Lower lobe of right lung (tissue), 2 donors: ENCODE measurements at regions of chr2 and their contacts with region 1.

Region 1: DNA sequence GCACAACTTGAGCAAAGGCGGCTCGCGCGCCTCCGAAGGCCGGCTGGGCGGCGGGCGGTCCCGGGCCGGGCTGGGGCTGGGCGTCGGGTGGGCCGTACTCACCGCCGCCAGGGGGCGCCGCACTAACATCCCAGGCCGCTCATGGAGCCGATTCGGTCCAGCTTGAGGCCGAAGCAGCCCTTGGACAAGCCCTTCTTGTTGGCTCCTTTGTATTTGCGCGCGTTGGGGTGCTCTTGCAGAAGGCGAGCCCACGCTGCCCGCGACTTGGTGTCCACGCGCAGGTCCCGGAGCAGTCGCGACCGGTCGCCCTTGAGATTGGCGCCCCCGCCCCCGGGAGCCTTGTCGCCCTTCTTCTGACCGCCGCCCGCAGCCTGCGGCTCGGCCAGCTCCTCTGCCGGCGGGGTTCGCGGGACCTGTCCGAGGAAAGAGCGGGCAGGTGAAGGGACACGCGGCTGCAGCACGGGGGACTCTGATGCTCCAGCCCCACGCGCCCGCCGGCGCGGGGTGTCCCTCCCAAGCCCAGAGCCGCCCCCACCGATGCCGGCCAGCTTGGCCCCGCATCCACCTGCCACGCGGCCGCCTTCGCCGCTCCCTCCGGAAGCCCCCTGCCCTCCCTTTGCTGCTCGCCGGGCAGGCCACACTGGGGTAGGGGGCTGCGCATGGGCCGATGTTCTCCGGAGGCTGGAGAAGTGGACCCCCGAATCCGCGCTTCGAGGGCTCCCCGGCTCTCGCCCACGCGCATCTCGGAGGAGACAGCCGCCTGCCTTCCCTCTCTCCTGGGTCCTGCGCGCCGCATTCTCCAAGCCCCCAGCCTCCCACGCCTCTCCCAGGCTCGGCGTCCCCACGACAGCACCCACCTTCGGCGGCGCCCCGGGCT is 655 bp downstream of the NPPC start:
- DNase-seq: peak; percentile 86
- ATAC-seq: peak; percentile 94 to 97
- H3K4me3 ChIP-seq: peak overlapping the region; percentile 50
- H3K27ac ChIP-seq: no peak overlapping the region
- H3K4me1 ChIP-seq: peaks cover 25% of the 10 kb centered on the region
- H3K27me3 ChIP-seq: peaks cover 70% of the 10 kb centered on the region
- CTCF ChIP-seq: peak; percentile 96

Region 2: GRCh38 chr2:231452799-231453508 is 472.6 kb before region 1 on chr2:
- intact Hi-C with region 1: no loop called
- DNase-seq: no peak
- ATAC-seq: peak in 1 of 2 donors; percentile 6
- H3K4me3 ChIP-seq: no peak overlapping the region
- H3K27ac ChIP-seq: no peak overlapping the region
- H3K4me1 ChIP-seq: no peaks in the 10 kb centered on the region
- H3K27me3 ChIP-seq: no peaks in the 10 kb centered on the region
- CTCF ChIP-seq: no peak

Region 3: GRCh38 chr2:232142049-232142448 is 216.5 kb after region 1 on chr2:
- intact Hi-C with region 1: loop called (anchors 10 kb)
- DNase-seq: no peak
- ATAC-seq: peak; percentile 45 to 59
- H3K4me3 ChIP-seq: no peak overlapping the region
- H3K27ac ChIP-seq: no peak overlapping the region
- H3K4me1 ChIP-seq: no peaks in the 10 kb centered on the region
- H3K27me3 ChIP-seq: no peaks in the 10 kb centered on the region
- CTCF ChIP-seq: peak; percentile 62